Activated CD4-positive, alpha-beta T cell treated with anti-CD3 and anti-CD28 coated beads for 36 hours (primary cell): ENCODE measurements at regions of chr5 and their contacts with region 1.

Region 1: DNA sequence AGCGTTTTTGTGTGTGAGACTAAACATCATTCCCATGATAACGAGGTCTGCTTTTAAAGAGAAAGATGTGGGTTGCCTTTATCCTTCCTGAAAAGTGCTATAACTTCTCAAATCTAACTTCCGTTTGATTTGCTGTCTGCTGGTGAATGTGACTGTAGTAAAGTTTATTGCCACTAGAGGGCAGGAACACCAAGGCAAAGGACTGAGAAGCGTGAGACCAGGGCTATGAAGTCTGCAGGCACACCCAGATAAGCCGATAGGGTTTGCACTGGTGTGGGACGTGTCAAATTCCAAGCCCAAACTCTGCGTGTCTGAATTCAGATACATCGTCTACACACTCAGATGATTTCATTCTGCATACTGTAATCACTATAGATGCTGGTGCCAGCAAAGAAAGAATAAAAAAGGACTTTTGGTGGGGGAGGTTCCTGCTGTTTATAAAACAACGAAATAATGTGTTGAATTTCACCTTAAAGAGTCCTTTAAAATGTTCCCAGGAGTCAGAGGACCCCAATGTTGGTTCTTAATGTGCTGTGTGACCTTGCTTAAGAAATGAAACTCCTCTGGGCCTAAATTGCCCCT is 87.2 kb downstream of the PTTG1 start:
- DNase-seq: peak; percentile 76
- ATAC-seq: peak; percentile 73
- H3K4me3 Mint-ChIP-seq: no peak overlapping the region
- H3K27ac Mint-ChIP-seq: peak overlapping the region; percentile 82
- H3K4me1 Mint-ChIP-seq: peaks cover 45% of the 10 kb centered on the region
- H3K27me3 Mint-ChIP-seq: peaks cover 6% of the 10 kb centered on the region

Region 2: DNA sequence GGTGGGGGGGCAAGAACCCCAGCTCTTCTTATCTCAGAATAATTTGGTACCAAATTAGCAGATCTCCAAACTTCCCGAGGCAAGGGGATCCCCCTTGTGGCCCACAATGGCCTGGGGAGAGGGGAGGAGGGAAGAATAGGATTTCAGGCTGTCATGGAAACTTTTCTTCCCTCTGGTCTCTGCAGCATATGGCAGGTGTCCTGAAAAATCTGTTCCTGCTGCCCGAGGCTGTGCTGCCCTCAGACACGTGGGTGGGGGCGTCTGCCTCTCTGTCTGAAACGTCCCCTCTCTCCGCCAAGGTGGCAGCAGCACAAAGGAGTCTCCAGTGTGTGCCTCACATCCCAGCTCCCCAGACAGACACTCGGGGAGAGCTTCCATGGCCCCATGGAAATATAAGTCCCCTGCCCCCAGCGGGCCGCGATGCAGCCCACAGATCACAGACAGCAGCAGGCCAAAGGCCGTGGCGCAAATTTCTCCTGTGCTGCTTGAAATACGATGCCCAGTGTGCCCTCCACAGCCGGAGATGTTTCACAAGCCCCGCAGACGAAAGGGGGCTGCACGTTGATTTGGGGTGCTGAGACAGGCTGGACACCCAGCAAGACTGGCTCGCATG is 230.4 kb before region 1 on chr5:
- CTCF ChIA-PET with region 1: no interaction called
- POLR2A ChIA-PET with region 1: no interaction called
- intact Hi-C with region 1: no loop called
- DNase-seq: no peak
- ATAC-seq: no peak
- H3K4me3 Mint-ChIP-seq: no peak overlapping the region
- H3K27ac Mint-ChIP-seq: no peak overlapping the region
- H3K4me1 Mint-ChIP-seq: no peaks in the 10 kb centered on the region
- H3K27me3 Mint-ChIP-seq: no peaks in the 10 kb centered on the region

Region 3: GRCh38 chr5:160418561-160419457 is 90.1 kb before region 1 on chr5 and contains the start of gene SLU7:
- CTCF ChIA-PET with region 1: interaction called, 5 read pairs
- POLR2A ChIA-PET with region 1: interaction called, 5 read pairs
- intact Hi-C with region 1: loop called in 1 of 2 experiments (anchors 1 kb)
- DNase-seq: peak; percentile 96
- ATAC-seq: peak; percentile 80
- H3K4me3 Mint-ChIP-seq: peak within 1 kb of the TSS; percentile 96
- H3K27ac Mint-ChIP-seq: peak within 1 kb of the TSS; percentile 99
- H3K4me1 Mint-ChIP-seq: peaks cover 57% of the 10 kb centered on the region
- H3K27me3 Mint-ChIP-seq: no peaks in the 10 kb centered on the region
- total RNA-seq, gene SLU7: 41.1 to 53.0 TPM

Region 4: GRCh38 chr5:160539431-160539830 is 30.6 kb after region 1 on chr5:
- CTCF ChIA-PET with region 1: interaction called, 7 read pairs
- POLR2A ChIA-PET with region 1: no interaction called
- intact Hi-C with region 1: loop called (anchors 1 kb)
- DNase-seq: peak; percentile 82
- ATAC-seq: peak; percentile 95
- H3K4me3 Mint-ChIP-seq: no peak overlapping the region
- H3K27ac Mint-ChIP-seq: no peak overlapping the region
- H3K4me1 Mint-ChIP-seq: peaks cover 25% of the 10 kb centered on the region
- H3K27me3 Mint-ChIP-seq: peaks cover 3% of the 10 kb centered on the region

Region 5: GRCh38 chr5:160555961-160556631 is 47.2 kb after region 1 on chr5:
- CTCF ChIA-PET with region 1: no interaction called
- POLR2A ChIA-PET with region 1: no interaction called
- intact Hi-C with region 1: no loop called
- DNase-seq: no peak
- ATAC-seq: no peak
- H3K4me3 Mint-ChIP-seq: no peak overlapping the region
- H3K27ac Mint-ChIP-seq: no peak overlapping the region
- H3K4me1 Mint-ChIP-seq: no peaks in the 10 kb centered on the region
- H3K27me3 Mint-ChIP-seq: peaks cover 3% of the 10 kb centered on the region

Region 6: GRCh38 chr5:160787240-160787639 is 278.4 kb after region 1 on chr5:
- CTCF ChIA-PET with region 1: interaction called, 5 read pairs
- POLR2A ChIA-PET with region 1: no interaction called
- intact Hi-C with region 1: loop called (anchors 1 to 2 kb)
- DNase-seq: peak; percentile 43
- ATAC-seq: peak; percentile 30
- H3K4me3 Mint-ChIP-seq: no peak overlapping the region
- H3K27ac Mint-ChIP-seq: no peak overlapping the region
- H3K4me1 Mint-ChIP-seq: no peaks in the 10 kb centered on the region
- H3K27me3 Mint-ChIP-seq: peaks cover 6% of the 10 kb centered on the region

Region 7: GRCh38 chr5:160843240-160843639 is 334.4 kb after region 1 on chr5:
- CTCF ChIA-PET with region 1: no interaction called
- POLR2A ChIA-PET with region 1: no interaction called
- intact Hi-C with region 1: loop called in 1 of 2 experiments (anchors 5 kb)
- DNase-seq: no peak
- ATAC-seq: no peak
- H3K4me3 Mint-ChIP-seq: no peak overlapping the region
- H3K27ac Mint-ChIP-seq: no peak overlapping the region
- H3K4me1 Mint-ChIP-seq: no peaks in the 10 kb centered on the region
- H3K27me3 Mint-ChIP-seq: no peaks in the 10 kb centered on the region

Region 8: GRCh38 chr5:161544350-161544765 is 1035.5 kb after region 1 on chr5:
- CTCF ChIA-PET with region 1: no interaction called
- POLR2A ChIA-PET with region 1: no interaction called
- intact Hi-C with region 1: loop called in 1 of 2 experiments (anchors 10 kb)
- DNase-seq: peak; percentile 56
- ATAC-seq: peak; percentile 42
- H3K4me3 Mint-ChIP-seq: no peak overlapping the region
- H3K27ac Mint-ChIP-seq: no peak overlapping the region
- H3K4me1 Mint-ChIP-seq: peaks cover 7% of the 10 kb centered on the region
- H3K27me3 Mint-ChIP-seq: peaks cover 58% of the 10 kb centered on the region